RWPE1 (cell line): ENCODE measurements at regions of chr9 and their contacts with region 1.

Region 1: GRCh38 chr9:71795097-71795813 is 26.9 kb upstream of the CEMIP2 start:
- DNase-seq: no peak
- H3K27ac ChIP-seq: no peak overlapping the region
- CTCF ChIP-seq: no peak

Region 2: DNA sequence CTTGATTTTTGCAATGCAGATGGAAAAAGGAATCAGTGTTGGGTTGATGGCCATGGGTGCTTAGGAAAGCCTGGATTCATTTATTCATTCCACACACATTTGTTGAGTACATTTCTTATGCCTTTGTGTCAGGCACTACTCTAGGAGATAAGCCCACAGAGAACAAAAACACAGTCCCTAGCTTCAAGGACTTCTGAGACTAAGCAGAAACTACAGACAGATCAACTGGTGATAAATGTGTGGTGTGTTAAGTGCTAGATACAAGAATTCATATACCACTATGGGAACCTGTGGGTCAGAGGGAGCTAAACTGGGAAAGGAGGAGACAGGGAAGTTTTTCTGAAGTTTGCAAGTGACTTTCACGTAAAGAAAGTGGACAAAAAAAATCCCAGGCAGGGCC is 146.8 kb before region 1 on chr9:
- CTCF ChIA-PET with region 1: no interaction called
- POLR2A ChIA-PET with region 1: no interaction called
- DNase-seq: no peak
- H3K27ac ChIP-seq: no peak overlapping the region
- CTCF ChIP-seq: no peak

Region 3: DNA sequence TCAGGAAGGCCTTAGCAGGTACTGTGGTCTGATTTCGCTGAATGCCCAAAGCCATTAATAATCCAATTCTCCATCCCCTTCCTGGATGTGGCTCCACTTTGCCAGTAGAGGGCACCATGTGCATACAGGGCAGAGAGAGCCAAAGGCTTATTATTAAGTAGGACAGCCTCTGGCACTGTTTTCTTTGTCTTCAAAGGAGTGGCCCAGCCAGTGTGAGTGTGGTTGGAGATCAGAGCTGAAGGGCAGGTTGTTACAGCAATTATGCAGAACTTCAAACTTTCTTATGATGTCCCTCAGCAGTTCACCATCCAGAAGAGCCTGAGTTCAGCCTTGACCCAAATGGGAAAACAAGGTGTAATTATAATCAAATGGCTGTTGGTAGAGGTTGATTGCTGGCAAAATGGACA is 11.6 kb after region 1 on chr9:
- CTCF ChIA-PET with region 1: interaction called, 14 read pairs
- POLR2A ChIA-PET with region 1: no interaction called
- DNase-seq: peak; percentile 71
- H3K27ac ChIP-seq: no peak overlapping the region
- CTCF ChIP-seq: peak; percentile 84

Region 4: GRCh38 chr9:71975833-71976232 is 180.6 kb after region 1 on chr9:
- CTCF ChIA-PET with region 1: interaction called, 13 read pairs
- POLR2A ChIA-PET with region 1: no interaction called
- DNase-seq: no peak
- H3K27ac ChIP-seq: no peak overlapping the region
- CTCF ChIP-seq: peak; percentile 40